ENCODE measurements at regions of chr10 and their contacts with region 1.

Region 1: DNA sequence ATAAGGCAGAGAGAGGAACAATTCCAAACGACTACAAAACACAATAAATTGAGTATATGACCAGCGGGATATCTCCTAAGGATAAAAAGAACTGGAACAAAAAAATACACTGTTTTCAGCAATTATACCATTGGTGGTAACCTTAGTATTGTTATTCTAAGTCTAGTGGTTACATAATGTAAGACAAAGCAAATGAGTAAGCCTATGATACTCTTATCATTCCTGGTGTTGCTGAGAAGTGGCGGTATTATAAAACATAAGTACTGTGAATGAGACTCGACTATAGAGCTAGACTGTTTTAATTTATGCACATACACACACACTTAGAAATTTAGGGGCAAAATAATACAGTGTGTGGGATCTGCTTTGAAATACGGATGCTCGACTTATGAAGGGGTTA is 107.7 kb downstream of the NRBF2 start:
- DNase-seq: no peak
- ATAC-seq: no peak
- H3K4me3 ChIP-seq: no peak overlapping the region
- H3K27ac ChIP-seq: peak overlapping the region; percentile 19; the same call in 1 of the 2 replicates
- H3K4me1 ChIP-seq: peaks cover 70% of the 10 kb centered on the region
- H3K27me3 ChIP-seq: no peaks in the 10 kb centered on the region
- CTCF ChIP-seq: no peak

Region 2: DNA sequence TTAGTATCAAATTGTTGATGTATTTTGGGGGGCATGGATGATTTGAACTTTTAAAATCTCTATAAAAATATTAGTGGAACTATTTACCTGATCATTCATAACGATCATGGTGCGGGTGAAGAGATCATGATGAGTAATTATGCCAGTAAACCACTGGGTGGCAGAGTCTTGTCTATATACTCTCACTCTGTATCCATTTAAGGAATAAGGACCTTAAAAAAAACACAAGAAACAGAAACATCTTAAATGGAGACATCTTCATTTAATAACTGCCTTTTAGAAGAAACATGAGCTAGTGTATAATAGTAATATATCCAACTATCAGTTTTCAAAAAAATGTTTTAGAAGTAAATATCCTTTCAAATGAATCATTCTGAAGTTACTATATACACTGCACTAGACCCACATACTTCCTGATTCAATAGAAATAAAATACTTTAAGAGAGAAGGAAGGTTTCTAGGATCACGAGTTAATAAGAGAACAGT is 23.6 kb before region 1 on chr10:
- CTCF ChIA-PET with region 1: no interaction called
- POLR2A ChIA-PET with region 1: no interaction called
- in situ Hi-C with region 1: no loop called
- intact Hi-C with region 1: no loop called
- DNase-seq: peak; percentile 41
- ATAC-seq: peak; percentile 95
- H3K4me3 ChIP-seq: no peak overlapping the region
- H3K27ac ChIP-seq: peak overlapping the region; percentile 21; the same call in 1 of the 2 replicates
- H3K4me1 ChIP-seq: peaks cover 18% of the 10 kb centered on the region; the same call in 1 of the 2 replicates
- H3K27me3 ChIP-seq: no peaks in the 10 kb centered on the region
- CTCF ChIP-seq: peak; percentile 76; the same call in 1 of the 2 replicates

Region 3: DNA sequence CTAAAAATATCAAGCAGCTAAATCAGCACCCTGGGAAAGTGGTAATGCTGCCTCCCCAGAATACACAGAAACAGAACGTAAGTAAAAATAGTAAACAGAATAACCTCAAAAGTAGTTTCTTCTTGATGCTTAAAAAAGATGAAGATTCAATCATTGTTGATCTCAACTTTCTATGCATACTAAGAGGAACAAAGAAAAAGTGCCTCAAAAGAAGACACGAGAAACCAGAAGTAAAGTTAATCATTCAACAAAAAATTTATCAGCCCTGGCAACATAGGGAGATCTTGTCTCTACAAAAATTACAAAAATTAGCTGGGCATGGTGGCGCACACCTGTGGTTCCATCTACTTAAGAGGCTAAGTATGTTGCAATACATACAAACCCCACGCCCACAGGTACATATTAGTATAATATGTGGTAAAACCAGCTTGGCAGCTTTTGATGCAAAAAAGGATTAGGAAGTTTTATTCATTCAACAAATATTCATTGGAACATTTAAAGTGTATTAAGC is 46.0 kb after region 1 on chr10:
- CTCF ChIA-PET with region 1: no interaction called
- POLR2A ChIA-PET with region 1: interaction called, 10 read pairs
- in situ Hi-C with region 1: no loop called
- intact Hi-C with region 1: no loop called
- DNase-seq: no peak
- ATAC-seq: no peak
- H3K4me3 ChIP-seq: no peak overlapping the region
- H3K27ac ChIP-seq: no peak overlapping the region
- H3K4me1 ChIP-seq: no peaks in the 10 kb centered on the region
- H3K27me3 ChIP-seq: no peaks in the 10 kb centered on the region
- CTCF ChIP-seq: no peak